Transverse colon (tissue), 4 donors: ENCODE measurements at regions of chr3 and their contacts with region 1.

Region 1: DNA sequence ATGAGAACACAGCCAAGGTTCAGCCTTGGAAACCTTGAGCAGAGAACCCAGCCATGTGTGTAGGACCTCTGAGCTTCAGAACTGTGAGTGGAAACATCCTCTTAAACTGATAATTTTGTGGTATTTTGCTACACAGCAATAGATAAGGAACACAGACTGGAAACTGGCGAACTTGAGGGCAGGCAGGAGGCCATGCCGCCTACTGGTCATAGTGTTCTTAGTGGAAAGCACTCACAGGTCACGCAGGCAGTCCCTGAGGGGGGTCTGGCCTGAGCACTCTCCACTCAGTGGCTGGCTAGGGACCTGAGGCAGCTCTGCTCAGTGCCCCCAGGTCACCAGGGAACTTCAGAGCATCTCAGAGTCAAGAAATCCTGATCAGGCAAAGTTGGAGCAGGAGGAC is 9.7 kb upstream of the XIRP1 start:
- DNase-seq: no peak
- H3K4me3 ChIP-seq: no peak overlapping the region
- H3K27ac ChIP-seq: no peak overlapping the region
- H3K4me1 ChIP-seq: no peaks in the 10 kb centered on the region
- H3K27me3 ChIP-seq: no peaks in the 10 kb centered on the region
- CTCF ChIP-seq: no peak
- EP300 ChIP-seq: no peak
- POLR2A ChIP-seq: no peak

Region 2: DNA sequence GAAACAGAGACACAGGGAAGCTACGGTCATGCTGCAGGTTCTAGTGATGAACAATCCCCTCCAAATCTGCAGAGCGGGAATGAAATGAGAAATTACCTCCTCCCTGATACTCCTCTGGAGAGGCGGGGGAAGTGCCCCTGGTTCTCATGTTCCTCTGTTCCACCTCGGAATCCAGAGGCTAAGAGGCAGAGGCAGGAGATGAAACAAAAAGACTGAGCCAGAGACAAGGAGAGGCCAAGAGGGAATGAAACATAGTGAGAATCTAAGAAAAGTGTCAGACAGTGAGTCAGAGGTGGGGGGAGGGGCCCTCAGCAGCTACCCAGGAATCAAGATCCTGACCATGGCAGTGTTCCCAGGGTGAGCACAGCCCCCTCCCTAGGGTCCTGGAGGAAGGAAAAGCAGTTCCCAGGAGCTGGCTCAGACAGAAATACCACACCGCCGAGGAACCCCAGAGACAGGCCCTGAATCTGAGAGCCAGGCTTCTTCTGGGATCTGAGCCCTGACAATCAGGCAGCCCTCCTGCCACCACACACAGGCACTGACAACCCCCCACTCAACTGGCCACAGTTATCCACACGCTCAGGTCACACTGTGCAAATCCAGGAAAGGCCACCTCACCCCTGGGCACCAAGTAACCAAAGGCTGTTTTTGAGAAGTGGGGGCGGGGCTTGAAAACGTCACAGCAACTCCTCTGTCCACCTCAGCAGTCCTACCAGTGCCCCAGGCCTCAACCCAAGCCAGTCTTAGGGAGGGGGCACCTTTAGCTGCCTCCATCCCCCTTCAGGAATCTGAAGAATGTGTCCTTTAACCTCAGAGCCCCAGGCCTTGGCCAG is 51.1 kb before region 1 on chr3:
- in situ Hi-C with region 1: no loop called
- intact Hi-C with region 1: no loop called
- DNase-seq: peak; percentile 81
- H3K4me3 ChIP-seq: peak overlapping the region; percentile 1 to 93 (median 83)
- H3K27ac ChIP-seq: peak overlapping the region; percentile 98 to 99 (median 98)
- H3K4me1 ChIP-seq: peaks cover 56 to 77% (median 73%) of the 10 kb centered on the region in 4 donors
- H3K27me3 ChIP-seq: no peaks in the 10 kb centered on the region
- CTCF ChIP-seq: no peak
- EP300 ChIP-seq: no peak
- POLR2A ChIP-seq: no peak

Region 3: DNA sequence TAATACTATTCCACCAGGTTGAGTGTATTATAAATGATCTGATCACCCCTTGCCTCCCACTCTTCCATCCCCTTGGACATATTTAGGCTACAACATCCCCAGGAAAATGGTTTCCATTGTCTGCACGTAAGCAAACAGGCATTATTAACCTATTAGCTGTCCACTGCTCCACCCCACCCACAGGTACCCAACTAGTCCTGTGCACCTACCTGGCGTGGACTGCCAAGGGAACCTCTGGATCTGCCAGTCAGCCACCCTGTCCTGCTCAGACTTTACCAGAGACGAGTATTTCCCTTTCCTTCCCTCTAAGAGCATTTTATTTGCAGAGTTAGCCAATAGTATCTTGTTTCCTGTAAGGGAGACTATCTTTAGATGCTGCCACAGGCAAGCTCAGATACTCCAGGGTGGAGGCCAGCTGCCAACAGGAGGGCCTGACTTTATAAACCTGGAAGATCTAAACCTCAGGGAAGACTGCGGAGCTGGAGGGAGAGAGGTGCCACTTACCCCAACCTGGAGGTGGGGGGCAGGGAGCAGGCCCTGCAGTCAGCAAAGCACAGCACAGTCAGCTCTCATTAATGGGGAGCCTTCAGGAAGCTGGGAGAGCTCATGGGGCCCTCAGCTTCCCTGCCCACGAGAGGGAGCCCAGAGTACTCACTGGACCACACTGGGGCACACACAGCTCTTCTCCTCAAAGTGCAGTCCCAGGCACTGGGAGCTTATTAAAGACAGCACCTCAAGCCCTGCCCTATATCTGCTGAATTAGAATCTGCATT is 77.8 kb after region 1 on chr3 and contains the start of gene CX3CR1:
- in situ Hi-C with region 1: loop called in 2 of 4 experiments (anchors 5 to 25 kb)
- intact Hi-C with region 1: no loop called
- DNase-seq: no peak
- H3K4me3 ChIP-seq: no peak within 1 kb of the TSS
- H3K27ac ChIP-seq: no peak within 1 kb of the TSS
- H3K4me1 ChIP-seq: no peaks in the 10 kb centered on the region
- H3K27me3 ChIP-seq: no peaks in the 10 kb centered on the region
- CTCF ChIP-seq: no peak
- EP300 ChIP-seq: no peak
- POLR2A ChIP-seq: no peak
- total RNA-seq, gene CX3CR1: 0.32 TPM in 1 of 4 donors, not detected in the others

Region 4: DNA sequence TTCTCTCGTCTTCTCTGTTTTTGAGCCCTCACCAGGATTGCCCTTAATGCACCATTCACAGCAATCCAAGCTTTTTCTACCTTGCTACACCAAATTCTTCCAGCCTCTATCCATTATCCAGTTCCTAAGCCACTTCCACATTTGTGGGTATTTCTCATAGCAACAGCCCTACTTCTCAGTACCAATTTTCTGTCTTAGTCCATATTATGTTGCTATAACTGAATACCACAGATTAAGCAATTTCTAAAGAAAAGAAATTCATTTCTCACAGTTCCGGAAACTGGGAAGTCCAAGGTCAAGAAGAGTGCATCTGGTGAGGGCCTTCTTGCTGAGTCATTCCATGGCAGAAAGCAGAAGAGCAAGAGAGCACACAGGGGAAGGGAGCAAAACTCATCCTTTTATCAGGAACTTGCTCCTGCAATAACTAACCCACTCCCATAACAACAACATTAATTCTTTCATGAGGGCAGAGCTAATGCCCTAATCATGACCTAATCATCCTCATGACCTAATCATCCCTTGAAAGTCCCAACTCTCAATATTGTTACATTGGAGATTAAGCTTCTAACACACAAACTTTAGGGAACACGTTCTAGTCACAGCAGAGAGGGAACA is 1097.7 kb after region 1 on chr3:
- in situ Hi-C with region 1: no loop called
- intact Hi-C with region 1: loop called (anchors 5 kb)
- DNase-seq: no peak
- H3K4me3 ChIP-seq: no peak overlapping the region
- H3K27ac ChIP-seq: no peak overlapping the region
- H3K4me1 ChIP-seq: no peaks in the 10 kb centered on the region
- H3K27me3 ChIP-seq: no peaks in the 10 kb centered on the region
- CTCF ChIP-seq: no peak
- EP300 ChIP-seq: no peak
- POLR2A ChIP-seq: no peak